ENCODE measurements at regions of chr12 and their contacts with region 1.

Region 1: DNA sequence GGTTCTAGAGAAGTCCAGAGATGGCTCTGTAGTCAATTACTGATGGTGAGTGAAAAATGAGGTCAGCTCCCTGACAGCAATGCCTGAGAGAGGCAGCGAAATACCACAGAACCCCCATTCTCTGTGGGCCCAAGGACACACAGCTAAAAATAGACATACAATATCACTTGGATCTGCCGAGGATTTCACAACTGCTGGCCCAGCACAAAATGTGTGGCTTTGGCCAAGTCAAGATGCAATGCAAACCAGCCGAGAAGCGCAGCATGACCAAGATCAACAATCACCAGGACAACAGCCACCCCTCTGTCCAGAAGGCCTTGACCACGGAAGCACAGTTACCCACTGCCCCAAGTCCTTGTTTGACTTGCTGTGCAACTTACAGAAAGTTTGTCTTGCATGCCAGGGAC is 52.2 kb downstream of the CKAP4 start:
- DNase-seq: peak; percentile 68 to 84 (median 75)
- ATAC-seq: peak; percentile 78 to 86
- H3K4me3 ChIP-seq: no peak overlapping the region
- H3K27ac ChIP-seq: peak overlapping the region; percentile 15
- H3K4me1 ChIP-seq: peaks cover 5% of the 10 kb centered on the region
- H3K27me3 ChIP-seq: no peaks in the 10 kb centered on the region

Region 2: GRCh38 chr12:105409801-105410471 is 785.7 kb before region 1 on chr12:
- intact Hi-C with region 1: loop called in 1 of 4 experiments (anchors 10 kb)
- DNase-seq: peak; percentile 69 to 89 (median 85)
- ATAC-seq: peak; percentile 91 to 94
- H3K4me3 ChIP-seq: peak overlapping the region; percentile 7
- H3K27ac ChIP-seq: peak overlapping the region; percentile 59
- H3K4me1 ChIP-seq: peaks cover 5% of the 10 kb centered on the region
- H3K27me3 ChIP-seq: no peaks in the 10 kb centered on the region

Measured in right cardiac atrium (tissue), 5 donors.